ENCODE measurements at regions of chr3 and their contacts with region 1.

Region 1: GRCh38 chr3:45656575-45657363 is 32.4 kb upstream of the SACM1L start:
- DNase-seq: peak; percentile 84 to 92 (median 90)
- ATAC-seq: peak; percentile 89 to 95 (median 93)
- H3K4me3 ChIP-seq: no peak overlapping the region
- H3K27ac ChIP-seq: no peak overlapping the region
- H3K4me1 ChIP-seq: peaks cover 0 to 6% (median 0%) of the 10 kb centered on the region in 3 donors
- H3K27me3 ChIP-seq: no peaks in the 10 kb centered on the region
- CTCF ChIP-seq: peak; percentile 83 to 94 (median 87)

Region 2: DNA sequence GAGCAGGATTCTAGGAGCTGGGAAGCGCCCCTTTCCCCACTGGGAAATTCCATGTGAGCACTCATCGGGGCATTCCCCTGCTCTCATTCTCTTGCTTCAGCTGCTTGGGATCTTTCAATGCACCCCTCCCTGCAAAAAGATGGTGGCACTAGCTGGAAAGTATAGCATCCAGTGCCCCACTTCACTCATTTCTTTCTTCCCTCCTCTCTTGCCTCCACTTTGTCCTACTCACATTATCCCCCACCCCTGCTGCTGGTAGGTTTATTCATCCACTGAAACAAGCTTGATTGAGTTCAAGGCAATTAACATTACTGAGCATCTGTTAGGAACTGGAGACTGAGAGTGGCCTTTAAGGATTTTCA is 147.0 kb before region 1 on chr3:
- intact Hi-C with region 1: loop called (anchors 5 to 10 kb)
- DNase-seq: no peak
- ATAC-seq: no peak
- H3K4me3 ChIP-seq: no peak overlapping the region
- H3K27ac ChIP-seq: no peak overlapping the region
- H3K4me1 ChIP-seq: no peaks in the 10 kb centered on the region
- H3K27me3 ChIP-seq: no peaks in the 10 kb centered on the region
- CTCF ChIP-seq: no peak

Region 3: DNA sequence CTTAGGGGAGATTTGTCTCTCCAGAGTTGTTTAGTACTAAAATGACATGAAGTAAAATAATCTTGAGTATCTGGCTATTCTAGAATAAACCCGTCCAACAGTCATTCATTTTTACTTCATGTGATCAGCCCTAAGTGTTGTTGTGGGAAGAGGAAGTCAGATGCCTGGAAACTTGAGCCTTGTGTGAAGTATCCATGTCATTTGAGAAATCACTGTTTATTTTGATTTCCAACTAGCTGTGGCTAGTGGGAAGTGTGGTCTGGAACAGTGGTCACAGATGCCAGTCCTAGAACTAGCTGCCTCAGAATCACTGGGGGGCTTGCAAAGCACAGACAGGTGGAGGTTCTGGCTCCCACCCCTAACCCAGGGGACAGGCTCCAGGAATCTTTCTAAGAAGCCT is 139.9 kb before region 1 on chr3:
- intact Hi-C with region 1: loop called (anchors 5 to 10 kb)
- DNase-seq: no peak
- ATAC-seq: peak in 1 of 4 donors; percentile 23
- H3K4me3 ChIP-seq: no peak overlapping the region
- H3K27ac ChIP-seq: no peak overlapping the region
- H3K4me1 ChIP-seq: no peaks in the 10 kb centered on the region
- H3K27me3 ChIP-seq: no peaks in the 10 kb centered on the region
- CTCF ChIP-seq: no peak

Region 4: DNA sequence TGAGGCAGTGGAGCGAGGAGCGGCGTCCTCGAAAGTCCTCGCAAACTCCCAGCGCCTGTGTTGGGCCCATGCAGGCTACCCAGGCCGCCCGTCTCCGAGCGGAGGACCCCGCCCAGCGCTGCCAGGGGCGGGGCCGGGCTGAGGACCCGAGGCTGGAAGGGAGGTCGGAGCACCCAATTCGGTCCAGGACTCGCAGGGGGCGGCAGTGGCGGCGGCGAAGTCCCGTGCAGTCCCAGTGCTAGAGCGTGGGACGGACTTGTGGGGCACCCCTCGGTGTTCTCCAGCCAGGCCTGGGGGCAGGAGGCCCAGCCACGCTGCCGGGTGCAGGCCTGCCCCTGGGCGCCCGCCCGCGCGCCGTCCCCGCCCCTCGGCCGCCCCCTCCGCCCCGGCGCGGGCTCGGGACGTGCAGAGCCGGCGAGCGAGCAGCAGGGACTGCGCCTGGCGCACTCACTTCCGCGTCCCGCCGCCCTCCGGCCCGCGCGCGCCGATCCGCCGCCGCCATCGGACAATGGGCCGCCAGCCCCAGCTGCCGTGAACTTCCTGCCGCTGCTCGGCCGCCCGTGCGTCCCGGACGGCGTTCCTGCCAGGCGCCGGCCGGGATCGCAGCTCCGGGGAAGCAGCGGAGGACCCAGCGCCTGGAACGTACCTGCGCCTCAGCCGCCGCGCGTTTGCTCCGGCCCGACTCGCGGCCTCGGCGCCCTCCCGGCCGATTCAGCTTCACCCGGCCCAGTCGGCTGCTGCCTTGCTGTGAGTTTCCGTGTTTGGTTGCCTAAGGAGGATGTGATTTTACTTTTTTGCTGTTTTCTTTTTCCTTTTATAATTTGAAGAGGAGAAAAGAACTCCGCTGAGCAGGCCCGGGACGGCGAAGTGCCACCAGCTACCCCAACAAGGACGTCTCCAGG is 62.8 kb before region 1 on chr3:
- intact Hi-C with region 1: loop called in 2 of 3 experiments (anchors 5 kb)
- DNase-seq: peak; percentile 69 to 89 (median 78)
- ATAC-seq: peak; percentile 77 to 90 (median 86)
- H3K4me3 ChIP-seq: peak overlapping the region; percentile 62 to 83 (median 69)
- H3K27ac ChIP-seq: peak overlapping the region; percentile 75 to 92 (median 83)
- H3K4me1 ChIP-seq: peaks cover 15 to 34% (median 24%) of the 10 kb centered on the region in 3 donors
- H3K27me3 ChIP-seq: no peaks in the 10 kb centered on the region
- CTCF ChIP-seq: no peak

Measured in pancreas (tissue), 10 donors.